MCF 10A (cell line): ENCODE measurements at regions of chr9 and their contacts with region 1.

Region 1: GRCh38 chr9:37471942-37472679 is 6.9 kb upstream of the ZBTB5 start:
- DNase-seq: peak; percentile 95
- H3K4me3 Mint-ChIP-seq: peak overlapping the region; percentile 74
- H3K27ac Mint-ChIP-seq: peak overlapping the region; percentile 85
- H3K4me1 Mint-ChIP-seq: peaks cover 13% of the 10 kb centered on the region
- H3K27me3 Mint-ChIP-seq: no peaks in the 10 kb centered on the region
- CTCF ChIP-seq: no peak

Region 2: DNA sequence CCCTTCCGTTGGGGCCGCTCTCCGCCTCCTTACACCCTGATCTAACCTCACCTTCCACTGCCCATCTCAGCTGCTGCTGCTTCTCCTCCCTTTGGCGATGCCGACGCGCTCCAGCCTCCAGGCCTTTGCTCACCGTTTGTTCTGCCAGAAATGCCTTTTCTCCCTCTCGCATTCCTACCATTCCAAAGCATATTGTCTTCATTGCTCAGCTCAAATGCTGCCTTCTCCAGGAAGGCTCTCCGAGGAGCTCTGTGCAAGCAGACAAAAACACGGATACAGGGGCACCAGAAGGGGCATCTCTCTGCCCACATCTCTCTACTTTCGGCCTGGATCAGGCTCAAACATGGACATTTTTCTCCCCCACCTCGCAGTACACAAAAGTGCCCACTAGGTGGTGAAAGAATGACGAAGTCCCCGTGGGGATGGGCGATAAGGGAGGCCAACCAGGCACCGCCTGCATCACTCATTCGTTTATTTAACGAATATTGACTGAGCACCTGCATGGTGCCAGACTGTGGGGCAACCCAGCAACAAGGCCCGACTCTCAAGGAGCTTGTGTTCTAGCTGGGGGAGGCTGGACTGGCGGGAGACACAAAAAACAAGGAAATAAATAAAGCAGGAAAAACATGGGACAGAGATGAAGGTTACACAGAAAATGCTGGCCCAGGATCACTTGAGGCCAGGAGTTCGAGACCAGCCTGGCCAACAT is 56.9 kb before region 1 on chr9:
- CTCF ChIA-PET with region 1: interaction called, 3 read pairs
- POLR2A ChIA-PET with region 1: interaction called, 10 read pairs
- intact Hi-C with region 1: no loop called
- DNase-seq: peak; percentile 85
- H3K4me3 Mint-ChIP-seq: peak overlapping the region; percentile 32
- H3K27ac Mint-ChIP-seq: peak overlapping the region; percentile 80
- H3K4me1 Mint-ChIP-seq: peaks cover 48% of the 10 kb centered on the region
- H3K27me3 Mint-ChIP-seq: no peaks in the 10 kb centered on the region
- CTCF ChIP-seq: peak; percentile 72

Region 3: GRCh38 chr9:37430841-37431597 is 41.1 kb before region 1 on chr9:
- CTCF ChIA-PET with region 1: no interaction called
- POLR2A ChIA-PET with region 1: no interaction called
- intact Hi-C with region 1: no loop called
- DNase-seq: no peak
- H3K4me3 Mint-ChIP-seq: no peak overlapping the region
- H3K27ac Mint-ChIP-seq: no peak overlapping the region
- H3K4me1 Mint-ChIP-seq: peaks cover 5% of the 10 kb centered on the region
- H3K27me3 Mint-ChIP-seq: no peaks in the 10 kb centered on the region
- CTCF ChIP-seq: no peak

Region 4: DNA sequence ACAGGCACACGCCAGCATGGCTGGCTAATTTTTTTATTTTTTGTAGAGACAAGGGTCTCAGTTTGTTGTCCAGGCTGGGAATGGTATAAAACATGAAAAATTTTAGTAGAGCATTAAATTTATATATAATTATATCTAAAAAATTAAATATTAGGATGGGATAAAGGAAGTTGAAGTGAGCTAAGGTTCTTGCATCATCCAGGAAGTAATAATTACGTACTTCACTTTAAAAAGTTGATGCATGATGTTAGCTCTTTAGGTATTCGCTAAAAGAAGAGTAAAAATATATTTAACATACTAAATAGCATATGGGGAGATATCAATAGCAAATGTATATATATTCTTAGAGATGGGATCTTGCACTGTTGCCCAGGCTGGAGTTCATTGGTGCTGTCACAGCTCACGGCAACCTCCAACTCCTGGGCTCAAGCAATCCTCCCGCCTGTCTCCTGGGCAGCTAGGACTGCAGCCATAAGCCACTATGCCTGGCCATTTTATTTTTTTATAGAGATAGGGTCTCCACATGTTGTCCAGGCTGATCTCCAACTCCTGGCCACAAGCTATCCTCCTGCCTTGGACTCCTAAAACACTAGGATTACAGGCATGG is 340.8 kb after region 1 on chr9:
- CTCF ChIA-PET with region 1: no interaction called
- POLR2A ChIA-PET with region 1: no interaction called
- intact Hi-C with region 1: no loop called
- DNase-seq: no peak
- H3K4me3 Mint-ChIP-seq: no peak overlapping the region
- H3K27ac Mint-ChIP-seq: no peak overlapping the region
- H3K4me1 Mint-ChIP-seq: peaks cover 5% of the 10 kb centered on the region
- H3K27me3 Mint-ChIP-seq: no peaks in the 10 kb centered on the region
- CTCF ChIP-seq: no peak